Prostate gland (tissue), 2 donors: ENCODE measurements at regions of chrX and their contacts with region 1.

Region 1: GRCh38 chrX:153507484-153508178 is 9.8 kb upstream of the ATP2B3 start:
- DNase-seq: peak; percentile 58
- H3K4me3 ChIP-seq: no peak overlapping the region
- H3K27ac ChIP-seq: no peak overlapping the region
- H3K4me1 ChIP-seq: no peaks in the 10 kb centered on the region
- H3K27me3 ChIP-seq: no peaks in the 10 kb centered on the region
- CTCF ChIP-seq: peak; percentile 42 to 86 (median 75)
- POLR2A ChIP-seq: no peak

Region 2: DNA sequence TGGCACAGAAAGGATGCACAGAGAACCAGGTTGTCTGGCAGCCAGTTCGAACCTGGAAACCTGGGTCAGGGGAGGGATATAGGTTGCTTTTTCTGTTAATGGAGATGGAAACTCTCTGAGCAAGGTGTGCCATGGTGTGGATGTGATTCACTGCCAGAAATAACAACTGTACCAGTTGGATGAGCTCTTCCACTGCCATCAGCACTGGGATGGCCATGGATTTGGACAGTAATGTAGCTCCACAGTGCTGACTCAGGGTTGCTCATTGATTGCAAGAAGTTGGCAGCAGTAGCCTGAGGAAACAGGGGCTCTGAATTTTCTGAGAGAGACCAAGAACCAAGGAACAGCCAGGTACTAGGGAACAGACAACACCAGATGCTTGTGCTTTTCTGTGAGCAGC is 547.5 kb before region 1 on chrX:
- intact Hi-C with region 1: loop called (anchors 10 kb)
- DNase-seq: no peak
- H3K4me3 ChIP-seq: no peak overlapping the region
- H3K27ac ChIP-seq: no peak overlapping the region
- H3K4me1 ChIP-seq: no peaks in the 10 kb centered on the region
- H3K27me3 ChIP-seq: no peaks in the 10 kb centered on the region
- CTCF ChIP-seq: no peak
- POLR2A ChIP-seq: no peak

Region 3: DNA sequence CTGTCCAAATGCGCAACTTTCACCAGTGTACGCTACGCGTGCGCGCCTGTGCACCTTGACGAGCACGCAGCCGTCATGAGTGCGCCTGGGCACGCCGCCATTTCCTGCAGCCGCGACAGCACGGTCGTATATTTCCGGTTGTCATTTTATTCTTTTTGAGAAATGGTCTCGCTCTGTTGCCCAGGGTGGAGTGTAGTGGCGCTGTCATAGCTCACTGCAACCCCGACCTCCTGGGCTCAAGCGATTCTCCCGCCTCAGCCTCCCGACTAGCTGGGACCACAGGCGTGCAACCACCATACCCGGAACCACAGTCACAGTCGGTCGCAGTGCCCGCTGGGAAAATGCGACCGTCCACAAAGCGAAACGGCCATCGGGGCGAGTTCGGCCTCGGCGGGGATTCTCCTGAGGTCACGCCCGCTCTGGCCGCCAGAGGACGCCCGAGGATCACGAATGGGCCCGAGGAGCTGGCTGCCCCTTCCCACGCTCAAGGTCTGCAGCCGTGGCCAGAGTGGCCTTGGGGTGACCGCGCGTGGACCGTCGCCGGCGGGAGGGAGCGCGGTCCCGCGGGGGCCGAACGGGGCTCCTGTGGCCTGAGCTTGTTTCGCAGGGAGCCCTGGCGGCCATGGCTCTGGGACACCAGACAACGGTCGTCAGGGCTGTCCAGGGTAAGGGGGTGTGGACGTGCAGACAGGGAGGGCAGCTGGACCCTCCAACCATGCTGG is 475.1 kb before region 1 on chrX:
- intact Hi-C with region 1: loop called (anchors 10 kb)
- DNase-seq: peak; percentile 27
- H3K4me3 ChIP-seq: peak overlapping the region; percentile 10 to 12
- H3K27ac ChIP-seq: no peak overlapping the region
- H3K4me1 ChIP-seq: no peaks in the 10 kb centered on the region
- H3K27me3 ChIP-seq: no peaks in the 10 kb centered on the region
- CTCF ChIP-seq: peak; percentile 47 to 89 (median 72)
- POLR2A ChIP-seq: no peak

Region 4: GRCh38 chrX:153582896-153583295 is 75.3 kb after region 1 on chrX:
- intact Hi-C with region 1: no loop called
- DNase-seq: peak; percentile 17
- H3K4me3 ChIP-seq: no peak overlapping the region
- H3K27ac ChIP-seq: no peak overlapping the region
- H3K4me1 ChIP-seq: no peaks in the 10 kb centered on the region
- H3K27me3 ChIP-seq: no peaks in the 10 kb centered on the region
- CTCF ChIP-seq: no peak
- POLR2A ChIP-seq: no peak